ENCODE measurements at regions of chr22 and their contacts with region 1.

Region 1: GRCh38 chr22:19756288-19757128 is 4.1 kb upstream of the TBX1 start:
- DNase-seq: peak; percentile 61
- H3K4me3 Mint-ChIP-seq: peak overlapping the region; percentile 2
- H3K27ac Mint-ChIP-seq: no peak overlapping the region
- H3K4me1 Mint-ChIP-seq: peaks cover 17% of the 10 kb centered on the region
- H3K27me3 Mint-ChIP-seq: peaks cover 56% of the 10 kb centered on the region

Region 2: DNA sequence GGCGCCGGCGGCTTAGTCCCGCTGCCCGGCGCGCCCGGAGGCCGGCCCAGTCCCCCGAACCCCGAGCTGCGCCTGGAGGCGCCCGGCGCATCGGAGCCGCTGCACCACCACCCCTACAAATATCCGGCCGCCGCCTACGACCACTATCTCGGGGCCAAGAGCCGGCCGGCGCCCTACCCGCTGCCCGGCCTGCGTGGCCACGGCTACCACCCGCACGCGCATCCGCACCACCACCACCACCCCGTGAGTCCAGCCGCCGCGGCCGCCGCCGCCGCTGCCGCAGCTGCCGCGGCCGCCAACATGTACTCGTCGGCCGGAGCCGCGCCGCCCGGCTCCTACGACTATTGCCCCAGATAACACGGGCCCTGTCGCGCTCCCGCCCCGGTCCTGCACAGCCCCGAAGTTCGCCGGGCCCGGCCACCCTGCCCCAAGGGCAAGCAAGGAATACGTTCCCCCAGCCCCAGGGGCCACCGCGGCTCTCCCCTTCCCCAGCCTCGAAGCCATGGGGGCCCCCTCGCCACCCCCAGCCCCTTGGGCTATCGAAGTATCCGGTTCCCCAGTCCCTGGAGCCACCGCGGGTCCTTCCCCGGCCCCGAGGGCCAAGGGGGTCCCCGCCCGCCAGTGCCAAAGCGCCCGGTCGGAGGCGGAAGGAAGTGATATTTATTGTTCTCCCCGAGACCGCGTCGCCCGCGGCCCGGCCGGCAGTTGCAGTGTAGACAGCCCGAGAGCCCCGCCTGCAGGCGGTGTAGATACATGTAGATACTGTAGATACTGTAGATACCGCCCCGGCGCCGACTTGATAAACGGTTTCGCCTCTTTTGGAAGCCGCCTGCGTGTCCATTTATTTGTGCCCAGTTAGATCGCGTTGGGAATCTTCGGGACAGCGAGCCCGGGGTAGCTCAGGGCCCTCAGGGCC is 10.3 kb after region 1 on chr22:
- intact Hi-C with region 1: loop called (anchors 1 kb)
- DNase-seq: peak; percentile 35
- H3K4me3 Mint-ChIP-seq: no peak overlapping the region
- H3K27ac Mint-ChIP-seq: no peak overlapping the region
- H3K4me1 Mint-ChIP-seq: no peaks in the 10 kb centered on the region
- H3K27me3 Mint-ChIP-seq: peaks cover 58% of the 10 kb centered on the region

Region 3: DNA sequence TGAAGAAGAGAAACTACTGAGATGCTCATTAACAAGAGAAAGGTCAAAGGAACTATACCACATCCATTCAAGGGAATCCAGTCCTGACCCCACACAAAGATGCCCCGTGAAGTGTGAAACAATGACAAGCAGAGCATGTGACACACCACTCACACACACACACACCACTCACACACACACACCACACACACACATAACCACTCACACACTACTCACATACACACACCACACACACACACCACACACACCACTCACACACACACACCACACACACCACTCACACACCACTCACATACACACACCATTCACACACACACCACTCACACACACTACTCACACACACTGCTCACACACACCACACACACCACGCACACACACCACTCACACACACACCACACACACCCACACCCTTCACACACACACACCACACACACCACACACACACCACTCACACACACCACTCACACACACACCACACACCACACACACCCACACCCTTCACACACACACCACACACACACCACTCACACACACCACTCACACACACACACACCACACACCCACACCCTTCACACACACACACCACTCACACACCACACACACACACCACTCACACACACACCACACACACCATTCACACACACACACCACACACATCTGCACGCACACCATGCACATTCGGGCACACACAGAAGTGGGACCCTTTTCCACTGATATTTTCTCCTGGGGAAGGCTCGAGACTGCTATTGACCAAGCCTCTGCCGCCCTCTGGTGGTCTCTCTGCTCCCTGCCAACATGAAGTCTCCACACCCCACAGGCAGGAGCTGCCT is 153.1 kb after region 1 on chr22:
- intact Hi-C with region 1: loop called (anchors 1 kb)
- DNase-seq: peak; percentile 62
- H3K4me3 Mint-ChIP-seq: no peak overlapping the region
- H3K27ac Mint-ChIP-seq: peak overlapping the region; percentile 20
- H3K4me1 Mint-ChIP-seq: peaks cover 6% of the 10 kb centered on the region
- H3K27me3 Mint-ChIP-seq: no peaks in the 10 kb centered on the region

Measured in activated T-helper 1 cell treated with anti-CD3 and anti-CD28 coated beads, Interleukin-12 subunit alpha, Interleukin-12 subunit beta, Interleukin-2, Interleukin-4 antibody, amounts not matched to agents 30 ng/mL and 10 ng/mL and 1 ng/mL, durations not matched to agents 14 hours and 24 hours and 36 hours (primary cell).